ENCODE measurements at regions of chr2 and their contacts with region 1.

Region 1: DNA sequence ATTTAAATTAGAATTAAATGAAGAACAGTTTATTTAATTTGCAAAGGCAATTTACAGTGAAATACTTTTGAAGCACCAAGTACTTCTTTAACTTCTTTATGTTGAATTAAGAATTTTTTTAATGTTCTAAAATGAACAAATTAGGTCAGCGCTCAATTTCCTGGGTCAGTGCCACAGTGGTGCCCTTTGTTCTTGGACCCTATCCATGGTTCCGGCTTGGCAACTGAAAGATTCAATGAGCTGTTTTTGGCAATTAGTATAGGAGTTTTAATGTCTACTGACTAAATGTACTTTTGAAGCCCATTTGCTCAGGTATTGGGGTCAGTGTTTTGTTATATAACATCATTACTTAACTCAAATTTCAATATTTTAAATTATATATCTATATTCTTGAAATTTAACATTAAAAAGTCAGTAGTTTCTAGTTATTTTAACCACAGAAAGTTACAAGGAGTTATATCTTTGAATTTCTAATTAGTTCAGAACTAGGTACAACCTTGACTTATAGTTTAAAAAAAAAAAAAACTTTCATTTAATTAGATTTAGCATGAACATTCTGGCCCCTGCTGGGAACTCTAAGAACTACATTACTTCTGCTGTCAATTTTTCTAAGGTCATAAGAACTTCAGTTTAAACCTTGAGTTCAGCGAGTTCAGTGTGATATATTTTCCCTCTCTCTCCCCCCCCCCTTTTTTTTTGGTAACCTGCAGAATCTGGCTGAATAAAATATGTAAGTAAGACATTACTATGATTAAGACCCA is 7.6 kb upstream of the MSTN start:
- DNase-seq: no peak
- H3K4me3 Mint-ChIP-seq: no peak overlapping the region
- H3K27ac Mint-ChIP-seq: no peak overlapping the region
- H3K4me1 Mint-ChIP-seq: no peaks in the 10 kb centered on the region
- H3K27me3 Mint-ChIP-seq: no peaks in the 10 kb centered on the region

Region 2: DNA sequence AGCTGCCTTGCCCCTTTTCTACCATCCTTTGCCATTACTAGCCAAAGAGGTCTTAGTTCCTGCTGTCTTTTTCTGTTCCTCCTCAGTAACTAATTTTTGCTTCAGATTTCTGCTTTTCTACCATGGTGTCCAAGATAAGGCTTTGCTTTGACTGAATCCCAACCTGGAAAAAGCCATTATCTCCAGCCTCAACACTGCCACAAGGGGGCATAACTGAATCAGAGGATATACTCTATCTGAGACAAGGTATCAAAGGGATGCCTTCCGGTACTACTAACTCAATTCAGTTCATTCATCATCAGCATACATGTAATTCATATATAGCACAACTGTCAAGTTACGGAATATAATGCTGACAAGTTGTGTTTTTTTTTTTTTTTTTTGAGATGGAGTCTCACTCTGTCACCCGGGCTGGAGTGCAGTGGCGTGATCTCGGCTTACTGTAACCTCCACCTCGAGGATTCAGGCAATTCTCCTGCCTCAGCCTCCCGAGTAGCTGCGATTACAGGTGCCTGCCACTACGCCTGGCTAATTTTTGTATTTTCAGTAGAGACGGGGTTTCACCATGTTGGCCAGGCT is 318.9 kb before region 1 on chr2:
- CTCF ChIA-PET with region 1: interaction called, 3 read pairs
- POLR2A ChIA-PET with region 1: no interaction called
- intact Hi-C with region 1: loop called (anchors 2 kb)
- DNase-seq: peak; percentile 45
- H3K4me3 Mint-ChIP-seq: no peak overlapping the region
- H3K27ac Mint-ChIP-seq: no peak overlapping the region
- H3K4me1 Mint-ChIP-seq: no peaks in the 10 kb centered on the region
- H3K27me3 Mint-ChIP-seq: no peaks in the 10 kb centered on the region

Region 3: DNA sequence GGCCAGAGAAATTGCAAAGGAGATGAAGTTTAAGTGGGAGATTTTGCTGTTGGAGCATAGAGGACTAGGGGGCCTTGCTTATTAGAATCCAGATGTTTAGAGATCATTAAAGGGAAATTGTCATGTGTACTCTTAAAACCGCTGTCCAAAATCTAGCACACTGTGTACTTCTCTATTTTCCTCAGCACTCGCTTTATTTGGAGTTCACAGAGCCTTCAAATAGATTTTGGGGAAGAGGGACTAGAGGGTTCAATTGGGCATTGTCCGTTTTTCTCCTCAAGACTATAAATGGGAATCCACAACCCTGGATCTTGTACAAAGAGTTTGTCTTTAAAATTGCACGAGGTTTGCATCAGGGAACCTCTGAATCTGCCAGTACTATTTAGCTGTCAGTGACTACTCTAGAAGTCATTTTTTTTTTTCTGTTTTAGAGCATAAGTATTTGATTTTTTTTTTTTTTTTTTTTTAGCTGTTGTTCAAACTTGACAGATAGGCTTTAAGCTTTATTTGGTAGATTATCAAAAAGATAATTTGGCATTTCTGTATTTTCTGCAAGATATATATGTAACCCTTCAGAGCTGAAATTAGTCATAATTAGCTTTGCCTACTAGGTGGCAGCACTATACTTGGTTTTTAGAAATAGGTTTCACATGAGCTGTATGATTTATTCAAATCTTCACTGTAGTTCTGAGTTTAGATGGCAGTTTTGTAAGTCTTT is 271.6 kb before region 1 on chr2:
- CTCF ChIA-PET with region 1: interaction called, 7 read pairs
- POLR2A ChIA-PET with region 1: no interaction called
- intact Hi-C with region 1: loop called (anchors 10 kb)
- DNase-seq: no peak
- H3K4me3 Mint-ChIP-seq: no peak overlapping the region
- H3K27ac Mint-ChIP-seq: no peak overlapping the region
- H3K4me1 Mint-ChIP-seq: peaks cover 3% of the 10 kb centered on the region
- H3K27me3 Mint-ChIP-seq: no peaks in the 10 kb centered on the region

Region 4: GRCh38 chr2:189899101-189899500 is 171.0 kb before region 1 on chr2:
- CTCF ChIA-PET with region 1: no interaction called
- POLR2A ChIA-PET with region 1: no interaction called
- intact Hi-C with region 1: no loop called
- DNase-seq: no peak
- H3K4me3 Mint-ChIP-seq: no peak overlapping the region
- H3K27ac Mint-ChIP-seq: no peak overlapping the region
- H3K4me1 Mint-ChIP-seq: no peaks in the 10 kb centered on the region
- H3K27me3 Mint-ChIP-seq: no peaks in the 10 kb centered on the region

Region 5: DNA sequence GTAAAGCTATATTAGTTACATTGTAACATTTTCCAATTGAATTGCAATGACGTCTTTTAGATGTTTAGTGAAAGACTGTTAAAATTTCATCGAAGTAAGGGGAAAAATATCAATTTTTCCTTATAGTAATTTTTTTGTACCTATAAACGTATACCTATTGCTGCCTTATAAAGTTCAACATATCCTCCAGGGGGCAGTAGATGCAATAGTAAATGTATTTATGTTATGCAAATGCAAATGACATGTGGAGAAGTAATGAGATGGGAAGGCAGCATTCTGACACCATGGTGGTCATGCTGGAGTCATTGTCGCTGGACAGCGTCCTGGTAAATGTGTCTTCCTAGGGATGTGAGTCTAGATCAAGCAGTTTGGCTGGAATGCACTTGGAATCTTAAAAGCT is 46.3 kb before region 1 on chr2:
- CTCF ChIA-PET with region 1: interaction called, 4 read pairs
- POLR2A ChIA-PET with region 1: no interaction called
- intact Hi-C with region 1: loop called (anchors 1 kb)
- DNase-seq: no peak
- H3K4me3 Mint-ChIP-seq: no peak overlapping the region
- H3K27ac Mint-ChIP-seq: no peak overlapping the region
- H3K4me1 Mint-ChIP-seq: no peaks in the 10 kb centered on the region
- H3K27me3 Mint-ChIP-seq: peaks cover 12% of the 10 kb centered on the region

Measured in activated CD4-positive, alpha-beta memory T cell treated with anti-CD3 and anti-CD28 coated beads for 36 hours (primary cell).